Mammary epithelial cell (primary cell): ENCODE measurements at regions of chr7 and their contacts with region 1.

Region 1: GRCh38 chr7:38318803-38319416 is 45.5 kb upstream of the TARP start:
- DNase-seq: peak; percentile 52
- H3K4me3 ChIP-seq: no peak overlapping the region
- H3K27ac ChIP-seq: no peak overlapping the region
- H3K4me1 ChIP-seq: peaks cover 4% of the 10 kb centered on the region
- H3K27me3 ChIP-seq: peaks cover 2% of the 10 kb centered on the region
- CTCF ChIP-seq: peak; percentile 54 to 71

Region 2: DNA sequence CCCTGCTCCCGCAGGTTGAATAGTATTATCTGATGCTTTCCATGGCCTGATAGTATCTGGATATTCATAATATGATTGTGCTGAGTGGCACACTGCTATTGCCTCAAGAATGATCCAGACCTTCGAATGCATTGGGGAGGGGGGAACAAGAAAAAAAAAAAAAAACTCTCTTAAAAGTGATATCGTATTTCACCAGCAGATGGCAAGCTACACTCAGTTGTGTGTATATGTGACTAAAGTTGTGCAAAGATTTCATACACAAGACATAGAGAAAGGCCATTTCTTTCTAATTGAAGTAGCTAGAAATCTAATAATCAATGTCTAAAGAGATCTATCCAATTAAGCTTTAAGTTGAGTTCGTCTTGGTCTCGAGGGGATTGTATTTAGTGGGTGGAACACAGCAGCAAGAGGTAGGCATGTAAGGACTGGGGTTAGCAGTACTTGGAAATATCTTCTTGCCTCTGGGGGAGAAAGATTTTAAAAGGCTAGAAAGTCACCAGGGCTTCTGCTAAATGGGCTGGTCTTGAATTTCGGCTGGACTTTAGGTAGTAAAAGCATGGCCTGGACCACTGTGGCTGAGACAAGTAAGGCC is 417.6 kb before region 1 on chr7:
- CTCF ChIA-PET with region 1: interaction called, 4 read pairs
- dilution Hi-C with region 1: no loop called
- in situ Hi-C with region 1: no loop called
- intact Hi-C with region 1: loop called (anchors 1 kb)
- DNase-seq: peak; percentile 6
- H3K4me3 ChIP-seq: no peak overlapping the region
- H3K27ac ChIP-seq: no peak overlapping the region
- H3K4me1 ChIP-seq: peaks cover 6% of the 10 kb centered on the region
- H3K27me3 ChIP-seq: peaks cover 2% of the 10 kb centered on the region
- CTCF ChIP-seq: peak; percentile 55 to 58

Region 3: DNA sequence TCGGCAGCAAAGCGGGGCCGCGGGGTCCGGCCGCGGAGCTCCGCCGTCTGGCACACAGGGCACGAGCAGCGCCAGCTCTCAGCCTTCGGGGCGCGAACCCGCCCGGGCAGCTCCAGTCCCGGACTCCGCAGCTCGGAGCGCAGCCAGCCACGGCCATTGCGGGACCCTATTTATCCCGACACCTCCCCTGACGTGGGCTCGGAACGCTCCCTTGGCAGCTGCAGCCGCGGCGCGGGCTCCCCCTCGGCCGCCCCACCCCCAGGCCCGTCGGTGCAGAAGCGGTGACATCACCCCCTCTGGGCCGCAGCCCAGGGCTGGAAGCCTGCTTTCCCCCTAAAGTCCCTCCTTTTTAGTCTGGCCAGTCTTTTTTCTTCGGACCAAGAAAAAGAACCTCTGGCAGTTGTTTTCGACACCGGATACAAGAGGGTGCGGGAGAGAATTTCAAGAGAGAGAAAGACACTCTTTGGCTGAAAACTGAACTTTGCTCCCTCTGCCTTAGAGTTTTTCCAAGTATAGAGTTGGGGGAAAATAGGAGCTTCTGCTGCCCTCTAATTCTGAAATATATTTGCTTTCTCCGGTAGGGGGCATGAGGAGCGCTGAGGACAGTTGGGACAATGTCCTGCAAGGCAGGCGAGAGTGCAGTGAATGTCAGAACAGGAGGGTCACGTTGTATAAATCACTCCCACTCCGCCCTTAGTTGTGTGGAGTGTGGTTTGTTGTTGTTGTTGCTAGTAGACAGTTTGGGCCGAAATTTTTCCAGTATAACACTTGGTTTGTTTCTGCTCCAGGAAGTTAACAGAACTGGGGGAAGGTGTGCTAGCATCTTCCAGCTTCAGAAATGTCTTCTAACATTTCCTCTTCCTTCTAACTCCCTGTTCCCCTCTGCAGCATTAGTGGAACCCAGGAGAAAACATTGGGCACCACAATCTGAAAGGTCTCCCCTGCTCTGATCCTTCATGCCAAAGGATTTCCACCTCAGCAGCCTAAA is 401.9 kb before region 1 on chr7 and contains the start of gene SFRP4:
- CTCF ChIA-PET with region 1: interaction called, 6 read pairs
- dilution Hi-C with region 1: no loop called
- in situ Hi-C with region 1: no loop called
- intact Hi-C with region 1: loop called (anchors 5 kb)
- DNase-seq: peak; percentile 12
- H3K4me3 ChIP-seq: no peak within 1 kb of the TSS
- H3K27ac ChIP-seq: no peak within 1 kb of the TSS
- H3K4me1 ChIP-seq: peaks cover 15% of the 10 kb centered on the region
- H3K27me3 ChIP-seq: peaks cover 10% of the 10 kb centered on the region
- CTCF ChIP-seq: peak; percentile 52 to 61
- total RNA-seq, gene SFRP4: not detected

Region 4: DNA sequence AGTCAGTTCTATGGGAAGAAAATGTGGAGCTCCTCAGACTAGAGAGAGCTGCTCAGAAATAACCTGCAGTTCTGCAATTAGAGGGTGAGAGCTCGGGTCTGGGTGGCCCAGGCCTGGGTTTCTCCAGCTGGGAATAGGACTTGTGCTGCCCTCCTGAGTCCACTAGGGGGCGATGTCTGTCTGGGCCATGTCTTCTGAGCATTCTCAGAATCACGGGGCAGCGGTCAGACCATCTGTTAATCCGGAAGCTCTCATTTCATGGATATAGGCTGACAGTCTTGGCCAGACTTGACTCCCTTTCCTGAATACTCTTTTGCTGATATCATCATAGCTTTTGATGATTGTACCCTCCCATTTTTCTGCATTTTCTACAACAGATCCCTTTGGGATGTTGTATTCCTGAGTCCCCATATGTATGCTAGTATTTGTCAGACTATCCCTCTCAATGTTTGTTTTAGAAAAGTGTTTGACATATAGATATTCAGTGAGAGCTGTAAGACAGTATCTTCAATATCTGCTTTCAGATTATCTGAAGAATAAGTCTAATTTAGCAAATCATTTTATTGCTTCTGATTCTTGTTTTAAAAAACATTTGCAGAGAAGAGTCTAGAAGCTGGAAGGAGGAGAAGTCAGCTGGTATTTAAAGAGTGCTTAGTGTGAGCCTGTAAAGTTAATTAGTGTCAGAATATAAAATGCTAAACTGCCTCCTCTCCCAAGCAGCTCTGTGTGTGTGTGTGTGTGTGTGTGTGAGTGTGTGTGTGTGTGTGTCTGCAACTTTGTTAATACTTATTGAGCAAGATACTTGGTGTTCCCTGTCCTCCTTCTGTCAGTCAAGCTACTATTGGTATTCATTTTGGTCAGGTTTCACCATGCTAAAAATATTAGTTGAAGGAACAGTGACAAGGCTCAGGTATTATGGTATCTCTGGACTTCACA is 102.9 kb before region 1 on chr7:
- CTCF ChIA-PET with region 1: no interaction called
- dilution Hi-C with region 1: no loop called
- in situ Hi-C with region 1: no loop called
- intact Hi-C with region 1: loop called (anchors 1 kb)
- DNase-seq: peak; percentile 40
- H3K4me3 ChIP-seq: no peak overlapping the region
- H3K27ac ChIP-seq: no peak overlapping the region
- H3K4me1 ChIP-seq: no peaks in the 10 kb centered on the region
- H3K27me3 ChIP-seq: no peaks in the 10 kb centered on the region
- CTCF ChIP-seq: peak; percentile 86 to 94

Region 5: GRCh38 chr7:38222481-38223096 is 96.3 kb before region 1 on chr7:
- CTCF ChIA-PET with region 1: no interaction called
- dilution Hi-C with region 1: no loop called
- in situ Hi-C with region 1: no loop called
- intact Hi-C with region 1: loop called (anchors 2 kb)
- DNase-seq: peak; percentile 50
- H3K4me3 ChIP-seq: no peak overlapping the region
- H3K27ac ChIP-seq: no peak overlapping the region
- H3K4me1 ChIP-seq: no peaks in the 10 kb centered on the region
- H3K27me3 ChIP-seq: no peaks in the 10 kb centered on the region
- CTCF ChIP-seq: peak; percentile 87 to 89

Region 6: GRCh38 chr7:38257350-38257677 is 61.6 kb before region 1 on chr7:
- CTCF ChIA-PET with region 1: no interaction called
- dilution Hi-C with region 1: no loop called
- in situ Hi-C with region 1: no loop called
- intact Hi-C with region 1: no loop called
- DNase-seq: no peak
- H3K4me3 ChIP-seq: no peak overlapping the region
- H3K27ac ChIP-seq: no peak overlapping the region
- H3K4me1 ChIP-seq: no peaks in the 10 kb centered on the region
- H3K27me3 ChIP-seq: no peaks in the 10 kb centered on the region
- CTCF ChIP-seq: no peak